Head of caudate nucleus (tissue), 42 donors: ENCODE measurements at regions of chr5 and their contacts with region 1.

Region 1: DNA sequence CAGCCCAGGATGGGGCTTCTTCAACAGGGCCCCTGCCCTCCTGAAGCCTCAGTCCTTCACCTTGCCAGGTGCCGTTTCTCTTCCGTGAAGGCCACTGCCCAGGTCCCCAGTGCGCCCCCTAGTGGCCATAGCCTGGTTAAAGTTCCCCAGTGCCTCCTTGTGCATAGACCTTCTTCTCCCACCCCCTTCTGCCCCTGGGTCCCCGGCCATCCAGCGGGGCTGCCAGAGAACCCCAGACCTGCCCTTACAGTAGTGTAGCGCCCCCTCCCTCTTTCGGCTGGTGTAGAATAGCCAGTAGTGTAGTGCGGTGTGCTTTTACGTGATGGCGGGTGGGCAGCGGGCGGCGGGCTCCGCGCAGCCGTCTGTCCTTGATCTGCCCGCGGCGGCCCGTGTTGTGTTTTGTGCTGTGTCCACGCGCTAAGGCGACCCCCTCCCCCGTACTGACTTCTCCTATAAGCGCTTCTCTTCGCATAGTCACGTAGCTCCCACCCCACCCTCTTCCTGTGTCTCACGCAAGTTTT is 23.6 kb downstream of the PCDHGC5 start:
- DNase-seq: peak; percentile 69 to 93 (median 85)

Region 2: DNA sequence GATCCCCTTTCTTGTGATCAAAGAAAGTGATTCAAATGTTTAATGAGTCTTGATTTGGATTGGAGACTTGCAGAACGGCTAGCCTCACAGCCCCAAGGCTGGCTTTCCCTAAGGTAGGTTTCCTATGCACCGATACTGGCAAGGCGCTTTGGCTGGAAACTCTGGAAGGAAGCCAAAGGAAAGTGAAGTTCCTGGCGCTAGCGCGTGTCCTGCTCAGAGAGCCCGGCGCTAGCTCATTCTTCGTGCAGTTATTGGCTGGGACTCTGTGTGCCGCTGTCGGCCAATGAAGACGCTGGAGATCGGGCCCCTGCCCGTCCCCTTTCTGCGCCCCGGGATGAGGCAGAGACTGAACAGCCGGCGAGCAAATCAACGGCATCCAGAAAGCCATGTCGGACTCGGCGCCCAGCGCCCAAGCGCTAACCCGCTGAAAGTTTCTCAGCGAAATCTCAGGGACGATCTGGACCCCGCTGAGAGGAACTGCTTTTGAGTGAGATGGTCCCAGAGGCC is 36.8 kb before region 1 on chr5 and contains the start of gene PCDHGC3:
- intact Hi-C with region 1: loop called (anchors 5 kb)
- DNase-seq: peak; percentile 73 to 96 (median 89)